Activated CD8-positive, alpha-beta memory T cell treated with anti-CD3 and anti-CD28 coated beads, Interleukin-2, amount 10 ng/mL, durations not matched to agents 7 days and 5 days (primary cell): ENCODE measurements at regions of chr6 and their contacts with region 1.

Region 1: GRCh38 chr6:32796848-32797776 is 19.7 kb downstream of the HLA-DOB start:
- DNase-seq: peak; percentile 83
- ATAC-seq: peak; percentile 77
- H3K4me3 Mint-ChIP-seq: peak overlapping the region; percentile 61
- H3K27ac Mint-ChIP-seq: no peak overlapping the region
- H3K4me1 Mint-ChIP-seq: peaks cover 29% of the 10 kb centered on the region
- H3K27me3 Mint-ChIP-seq: peaks cover 81% of the 10 kb centered on the region

Region 2: GRCh38 chr6:32568561-32568960 is 228.6 kb before region 1 on chr6:
- CTCF ChIA-PET with region 1: no interaction called
- DNase-seq: no peak
- ATAC-seq: no peak
- H3K4me3 Mint-ChIP-seq: no peak overlapping the region
- H3K27ac Mint-ChIP-seq: no peak overlapping the region
- H3K4me1 Mint-ChIP-seq: peaks cover 3% of the 10 kb centered on the region
- H3K27me3 Mint-ChIP-seq: peaks cover 9% of the 10 kb centered on the region

Region 3: DNA sequence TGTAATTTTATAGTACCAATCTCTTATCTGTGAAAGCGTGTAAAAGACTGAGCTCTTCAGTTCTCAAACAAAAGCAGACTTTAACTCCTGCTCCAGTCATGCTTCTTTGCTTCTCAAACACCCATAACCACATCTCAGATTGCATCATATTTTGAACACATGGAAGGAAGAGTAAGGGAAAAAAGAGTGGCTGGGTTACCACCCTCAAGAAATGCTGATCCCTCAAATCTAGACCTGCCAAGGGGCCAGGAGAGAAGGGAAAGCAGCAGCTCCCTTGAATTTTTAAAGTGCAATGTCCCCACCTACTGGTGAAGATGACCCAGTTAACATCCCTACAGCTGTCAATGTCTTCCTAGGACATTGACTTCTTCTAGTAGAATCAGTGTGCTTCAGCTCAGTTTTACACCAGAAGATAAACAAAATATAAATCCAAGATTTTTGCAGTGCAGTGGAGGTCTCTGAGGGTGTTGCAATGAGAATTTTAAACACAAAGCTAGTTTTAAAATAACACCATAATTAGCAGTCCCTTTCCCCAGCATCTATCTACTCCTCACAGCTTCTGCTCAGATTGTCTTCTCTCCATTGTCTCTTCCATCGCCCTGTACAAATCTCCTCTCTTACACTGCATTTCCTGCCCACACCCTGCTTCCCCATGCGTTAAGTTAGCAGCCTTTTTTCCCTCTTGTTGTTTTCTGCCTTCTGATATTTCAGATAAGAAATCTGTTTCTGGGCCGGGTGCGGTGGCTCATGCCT is 11.2 kb before region 1 on chr6:
- CTCF ChIA-PET with region 1: interaction called, 18 read pairs
- DNase-seq: no peak
- ATAC-seq: peak; percentile 78
- H3K4me3 Mint-ChIP-seq: no peak overlapping the region
- H3K27ac Mint-ChIP-seq: no peak overlapping the region
- H3K4me1 Mint-ChIP-seq: peaks cover 2% of the 10 kb centered on the region
- H3K27me3 Mint-ChIP-seq: peaks cover 74% of the 10 kb centered on the region